H1 (cell line): ENCODE measurements at regions of chr14 and their contacts with region 1.

Region 1: GRCh38 chr14:64800000-64800399 is 79.7 kb downstream of the SPTB start:
- DNase-seq: no peak
- H3K4me3 ChIP-seq: no peak overlapping the region
- H3K27ac ChIP-seq: no peak overlapping the region
- H3K4me1 ChIP-seq: no peaks in the 10 kb centered on the region
- H3K27me3 ChIP-seq: no peaks in the 10 kb centered on the region
- CTCF ChIP-seq: peak; percentile 47 to 53 (median 51)
- EP300 ChIP-seq: no peak
- POLR2A ChIP-seq: no peak
- RAD21 ChIP-seq: peak; percentile 10 to 37; a peak in 1 of 4 replicates

Region 2: DNA sequence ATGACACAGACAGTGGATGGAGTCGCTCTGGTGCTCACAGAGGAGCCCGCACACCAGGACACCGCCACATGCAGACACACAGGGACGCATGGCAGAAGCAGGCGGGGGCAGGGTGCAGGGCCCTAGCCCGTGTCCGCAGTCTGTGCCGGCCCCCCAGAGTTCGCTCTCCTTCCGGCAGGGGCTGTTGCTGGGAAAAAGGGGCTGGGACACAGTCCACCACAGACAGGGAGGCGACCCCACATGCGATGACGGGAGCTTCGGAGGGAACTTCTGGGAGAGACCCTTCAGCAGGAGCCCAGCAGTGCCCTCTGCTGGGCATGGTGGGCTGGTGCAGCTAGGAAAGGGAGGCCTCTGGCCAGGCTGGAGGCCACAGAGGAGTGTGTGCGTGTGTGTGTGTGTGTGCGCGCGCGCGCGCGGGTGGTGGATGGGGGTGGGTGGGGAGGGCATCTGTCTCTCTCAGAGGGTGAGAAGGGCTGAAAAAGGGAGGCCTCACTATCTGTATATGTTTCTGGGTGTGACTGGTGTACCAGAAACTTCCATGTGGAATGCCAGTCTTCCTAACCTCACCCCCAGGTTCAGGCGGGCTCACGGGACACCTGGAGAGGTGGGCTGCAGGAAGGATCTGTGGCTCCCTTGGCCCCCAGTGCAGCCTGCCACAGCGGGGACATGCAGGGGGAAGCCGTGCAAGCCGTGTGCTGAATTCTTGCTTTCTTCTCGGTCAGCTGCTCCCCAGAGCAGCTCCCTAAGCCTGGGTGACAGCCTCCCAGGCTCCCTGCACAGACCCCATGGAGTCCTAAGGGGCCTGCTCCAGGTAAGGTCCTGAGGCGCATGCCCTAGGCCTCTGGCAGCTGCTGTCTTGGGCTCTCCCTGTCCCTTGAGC is 35.1 kb before region 1 on chr14:
- CTCF ChIA-PET with region 1: interaction called, 28 read pairs
- POLR2A ChIA-PET with region 1: no interaction called
- DNase-seq: peak; percentile 61 to 86
- H3K4me3 ChIP-seq: peak overlapping the region in 2 of 4 experiments; percentile 2 to 27; a peak in 2 of 8 replicates
- H3K27ac ChIP-seq: no peak overlapping the region
- H3K4me1 ChIP-seq: peaks cover 4 to 34% (median 24%) of the 10 kb centered on the region in 4 experiments
- H3K27me3 ChIP-seq: peaks cover 0 to 2% (median 0%) of the 10 kb centered on the region in 4 experiments; a peak in 3 of 7 replicates
- CTCF ChIP-seq: peak in 2 of 3 experiments; percentile 89 to 90; a peak in 3 of 4 replicates
- EP300 ChIP-seq: no peak
- POLR2A ChIP-seq: no peak
- RAD21 ChIP-seq: peak; percentile 82 to 84

Region 3: GRCh38 chr14:64788668-64789067 is 11.3 kb before region 1 on chr14:
- CTCF ChIA-PET with region 1: interaction called, 49 read pairs
- POLR2A ChIA-PET with region 1: interaction called, 4 read pairs
- DNase-seq: no peak
- H3K4me3 ChIP-seq: no peak overlapping the region
- H3K27ac ChIP-seq: no peak overlapping the region
- H3K4me1 ChIP-seq: peaks cover 0 to 10% (median 1%) of the 10 kb centered on the region in 4 experiments; a peak in 1 of 7 replicates
- H3K27me3 ChIP-seq: no peaks in the 10 kb centered on the region
- CTCF ChIP-seq: no peak
- EP300 ChIP-seq: no peak
- POLR2A ChIP-seq: no peak
- RAD21 ChIP-seq: no peak

Region 4: DNA sequence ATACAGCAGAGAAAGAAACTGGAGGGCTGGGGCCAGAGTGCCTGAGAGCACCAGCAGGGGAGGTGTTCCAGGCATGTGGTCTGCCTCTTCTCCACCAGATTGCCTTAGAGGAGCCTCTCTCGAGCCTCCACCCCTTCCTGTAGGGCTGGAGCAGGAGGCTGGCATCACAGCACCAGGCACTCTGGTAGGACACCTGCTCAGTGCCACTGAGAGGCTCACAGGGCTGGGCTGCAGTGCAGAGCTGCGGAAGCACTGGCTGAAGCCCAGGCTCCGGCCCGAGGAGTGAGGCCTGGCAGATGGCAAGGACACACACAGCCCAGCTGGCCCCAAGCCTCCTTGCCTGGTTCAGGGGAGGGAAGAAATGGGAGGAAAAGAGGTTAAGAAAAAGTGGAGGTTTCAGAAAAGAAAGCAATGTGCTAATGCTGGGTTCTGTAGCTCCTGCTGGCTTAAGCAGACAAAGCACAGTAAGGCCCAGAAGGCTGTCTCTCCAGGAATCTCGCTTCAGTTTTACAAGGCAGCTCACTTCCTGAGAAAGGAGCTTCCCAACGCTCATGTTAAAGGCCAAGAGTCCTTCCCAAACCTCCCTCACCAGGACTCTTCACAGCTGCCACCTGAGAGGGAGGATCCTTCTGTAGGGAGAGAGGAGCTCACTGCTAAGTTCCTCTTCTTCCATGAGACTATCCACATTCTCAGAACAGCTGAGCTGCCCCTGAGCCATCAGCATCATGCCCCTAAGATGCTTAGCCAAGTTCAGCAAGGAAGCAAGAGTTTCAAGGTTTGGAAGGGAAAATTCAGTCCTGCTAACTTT is 55.9 kb after region 1 on chr14:
- CTCF ChIA-PET with region 1: interaction called, 11 read pairs
- POLR2A ChIA-PET with region 1: no interaction called
- DNase-seq: no peak
- H3K4me3 ChIP-seq: no peak overlapping the region
- H3K27ac ChIP-seq: no peak overlapping the region
- H3K4me1 ChIP-seq: peaks cover 12 to 19% (median 14%) of the 10 kb centered on the region in 4 experiments
- H3K27me3 ChIP-seq: no peaks in the 10 kb centered on the region
- CTCF ChIP-seq: no peak
- EP300 ChIP-seq: no peak
- POLR2A ChIP-seq: no peak
- RAD21 ChIP-seq: no peak

Region 5: DNA sequence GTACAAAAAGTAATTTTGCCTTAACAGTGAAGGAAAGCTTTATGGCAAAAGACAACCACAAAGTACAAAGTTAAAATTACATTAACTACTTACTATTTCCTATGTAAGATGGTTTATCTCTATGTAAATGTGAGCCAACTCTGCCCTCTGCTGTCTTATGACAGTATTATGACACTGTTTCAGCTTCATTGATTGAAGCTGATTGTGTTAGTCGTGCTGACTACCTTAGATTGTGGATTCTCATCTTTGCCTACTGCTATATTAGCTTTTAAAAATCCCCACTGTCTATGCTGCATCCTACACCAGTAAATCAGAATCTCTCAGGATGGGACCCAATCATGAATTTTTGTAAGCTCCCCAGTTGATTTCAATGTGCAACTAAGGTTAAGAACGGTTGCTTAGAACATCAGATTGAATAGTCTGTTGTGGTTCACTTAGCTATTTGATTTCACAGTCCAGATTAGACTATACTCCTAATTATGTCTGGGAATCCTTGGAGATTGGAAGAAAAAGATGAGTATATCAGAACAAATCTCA is 91.9 kb after region 1 on chr14:
- CTCF ChIA-PET with region 1: interaction called, 323 read pairs
- POLR2A ChIA-PET with region 1: interaction called, 3 read pairs
- DNase-seq: no peak
- H3K4me3 ChIP-seq: no peak overlapping the region
- H3K27ac ChIP-seq: no peak overlapping the region
- H3K4me1 ChIP-seq: no peaks in the 10 kb centered on the region
- H3K27me3 ChIP-seq: no peaks in the 10 kb centered on the region
- CTCF ChIP-seq: peak in 2 of 3 experiments; percentile 59 to 64; a peak in 2 of 4 replicates
- EP300 ChIP-seq: no peak
- POLR2A ChIP-seq: no peak
- RAD21 ChIP-seq: peak; percentile 80 to 90